Lower leg skin (tissue), 4 donors: ENCODE measurements at regions of chr10 and their contacts with region 1.

Region 1: GRCh38 chr10:96107623-96108038 is 22.5 kb upstream of the ZNF518A start:
- DNase-seq: no peak
- H3K4me3 ChIP-seq: no peak overlapping the region
- CTCF ChIP-seq: no peak
- POLR2A ChIP-seq: no peak

Region 2: DNA sequence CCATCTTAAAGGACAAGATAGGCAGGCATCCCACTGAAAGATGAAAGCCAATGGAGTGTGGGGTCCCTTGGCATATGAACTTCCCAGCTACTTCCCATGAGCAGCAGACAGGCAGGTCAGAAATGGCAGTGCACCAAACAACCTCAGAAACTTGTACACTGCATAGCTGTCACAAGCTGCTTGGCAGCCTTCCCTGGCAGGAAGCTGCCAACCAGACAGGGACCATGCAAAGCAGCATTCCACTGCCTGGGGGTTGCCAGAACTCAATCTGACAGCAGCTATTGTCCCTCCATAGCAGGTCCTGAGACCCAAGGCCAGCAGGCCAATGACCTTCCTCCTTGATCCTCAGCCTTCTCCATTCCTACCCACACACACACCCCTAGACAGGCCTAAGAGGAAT is 1974.4 kb before region 1 on chr10:
- intact Hi-C with region 1: loop called (anchors 5 kb)
- DNase-seq: no peak
- H3K4me3 ChIP-seq: no peak overlapping the region
- CTCF ChIP-seq: no peak
- POLR2A ChIP-seq: no peak

Region 3: DNA sequence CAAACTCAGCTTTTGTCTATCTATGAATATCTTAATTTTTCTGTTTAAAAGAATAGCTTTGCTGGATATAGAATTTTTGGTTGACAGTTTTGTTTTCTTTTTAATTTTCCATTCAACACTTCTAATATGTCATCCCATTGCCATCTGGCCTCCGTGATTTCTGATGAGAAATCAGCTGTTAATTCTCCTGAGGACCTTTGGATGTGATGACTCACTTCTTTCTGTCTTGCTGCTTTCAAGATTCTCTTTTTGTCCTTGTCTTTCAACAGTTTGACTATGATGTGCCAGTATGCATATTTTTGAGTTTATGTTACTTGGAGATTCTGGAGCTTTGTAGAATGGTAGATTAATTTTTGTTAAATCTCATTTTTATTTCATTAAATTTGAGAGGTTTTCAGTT is 60.9 kb after region 1 on chr10:
- intact Hi-C with region 1: no loop called
- DNase-seq: no peak
- H3K4me3 ChIP-seq: no peak overlapping the region
- CTCF ChIP-seq: no peak
- POLR2A ChIP-seq: no peak

Region 4: DNA sequence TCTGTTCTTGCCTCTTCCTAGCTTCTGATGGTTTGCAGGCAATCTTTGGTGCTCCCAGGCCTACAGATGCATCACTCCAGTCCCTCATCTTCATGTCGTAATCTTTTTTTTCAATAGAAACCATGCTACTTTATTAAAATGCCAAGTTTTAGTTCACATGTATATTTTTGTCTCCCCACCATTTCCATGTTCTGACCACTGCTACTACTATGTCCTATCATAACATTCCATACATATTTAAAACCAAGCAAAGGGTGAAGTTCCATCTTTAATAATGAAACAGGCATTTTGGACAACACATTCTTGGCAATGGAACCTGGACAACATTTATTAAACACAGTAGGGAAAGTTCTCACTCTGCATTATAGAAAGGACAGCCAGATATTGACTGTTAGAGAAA is 81.3 kb after region 1 on chr10:
- intact Hi-C with region 1: no loop called
- DNase-seq: no peak
- H3K4me3 ChIP-seq: no peak overlapping the region
- CTCF ChIP-seq: no peak
- POLR2A ChIP-seq: no peak

Region 5: GRCh38 chr10:96309628-96310320 is 202.1 kb after region 1 on chr10:
- intact Hi-C with region 1: no loop called
- DNase-seq: no peak
- H3K4me3 ChIP-seq: no peak overlapping the region
- CTCF ChIP-seq: no peak
- POLR2A ChIP-seq: no peak

Region 6: GRCh38 chr10:96803318-96803664 is 695.7 kb after region 1 on chr10:
- intact Hi-C with region 1: no loop called
- DNase-seq: no peak
- H3K4me3 ChIP-seq: no peak overlapping the region
- CTCF ChIP-seq: no peak
- POLR2A ChIP-seq: no peak